Sigmoid colon (tissue), 7 donors: ENCODE measurements at regions of chr14 and their contacts with region 1.

Region 1: GRCh38 chr14:67943947-67944346 is 124.4 kb downstream of the RAD51B start:
- DNase-seq: peak; percentile 94
- H3K4me3 ChIP-seq: no peak overlapping the region
- H3K27ac ChIP-seq: peak overlapping the region; percentile 29 to 86 (median 82)
- H3K4me1 ChIP-seq: peaks cover 0 to 57% (median 51%) of the 10 kb centered on the region in 4 donors
- H3K27me3 ChIP-seq: no peaks in the 10 kb centered on the region
- CTCF ChIP-seq: peak; percentile 61 to 95 (median 88)
- EP300 ChIP-seq: no peak
- POLR2A ChIP-seq: no peak

Region 2: DNA sequence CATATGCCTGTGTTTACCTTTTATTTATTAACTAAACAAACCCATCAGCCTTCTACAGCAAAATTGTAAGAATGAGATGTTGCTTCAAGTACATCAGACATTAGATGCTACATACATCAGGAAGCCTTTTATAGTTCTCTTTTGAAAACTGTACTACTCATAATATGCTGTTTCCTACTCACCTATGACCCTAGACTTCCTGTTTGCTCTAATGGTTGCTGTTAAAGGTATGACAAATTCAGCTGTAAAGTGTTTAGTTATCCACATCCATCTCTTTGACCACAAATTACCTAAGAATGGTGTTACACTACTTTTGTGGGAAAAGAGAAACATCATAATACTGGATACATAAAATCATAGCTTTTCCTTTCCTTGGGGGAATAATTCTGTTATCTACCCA is 95.6 kb after region 1 on chr14:
- intact Hi-C with region 1: loop called (anchors 5 kb)
- DNase-seq: no peak
- H3K4me3 ChIP-seq: no peak overlapping the region
- H3K27ac ChIP-seq: peak overlapping the region; percentile 22 to 90 (median 85)
- H3K4me1 ChIP-seq: peaks cover 0 to 92% (median 61%) of the 10 kb centered on the region in 4 donors
- H3K27me3 ChIP-seq: no peaks in the 10 kb centered on the region
- CTCF ChIP-seq: no peak
- EP300 ChIP-seq: no peak
- POLR2A ChIP-seq: no peak

Region 3: DNA sequence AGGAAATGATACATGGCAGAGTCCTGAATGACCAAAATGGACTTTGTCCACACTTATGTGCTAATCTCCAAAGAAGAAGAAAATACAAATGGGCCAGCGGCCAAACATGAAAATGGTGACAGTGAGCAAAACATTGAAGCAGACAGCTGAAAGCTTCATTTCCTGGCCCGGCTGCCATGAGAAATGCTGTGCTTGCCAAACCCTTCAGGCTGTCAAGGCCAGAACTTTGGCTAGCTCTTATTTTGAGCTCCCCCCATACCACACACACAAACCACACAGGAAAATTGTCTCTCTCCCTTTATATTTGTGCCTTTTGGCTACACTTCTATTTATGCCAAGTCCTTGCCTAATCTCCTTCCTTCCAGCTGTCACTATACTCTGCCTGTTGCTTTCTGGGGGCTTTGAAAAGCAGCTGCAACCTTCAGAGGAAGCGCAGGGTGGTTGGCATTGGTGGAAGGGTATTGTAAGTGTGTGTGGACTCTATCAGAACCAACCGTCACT is 199.4 kb after region 1 on chr14:
- intact Hi-C with region 1: loop called (anchors 2 kb)
- DNase-seq: peak; percentile 93
- H3K4me3 ChIP-seq: no peak overlapping the region
- H3K27ac ChIP-seq: peak overlapping the region; percentile 86 to 92 (median 88)
- H3K4me1 ChIP-seq: peaks cover 0 to 97% (median 84%) of the 10 kb centered on the region in 4 donors
- H3K27me3 ChIP-seq: no peaks in the 10 kb centered on the region
- CTCF ChIP-seq: no peak
- EP300 ChIP-seq: peak in 1 of 4 donors; percentile 20
- POLR2A ChIP-seq: no peak

Region 4: GRCh38 chr14:68239988-68240771 is 296.2 kb after region 1 on chr14:
- intact Hi-C with region 1: loop called (anchors 2 kb)
- DNase-seq: peak; percentile 88
- H3K4me3 ChIP-seq: no peak overlapping the region
- H3K27ac ChIP-seq: peak overlapping the region; percentile 5 to 90 (median 85)
- H3K4me1 ChIP-seq: peaks cover 0 to 87% (median 75%) of the 10 kb centered on the region in 4 donors
- H3K27me3 ChIP-seq: no peaks in the 10 kb centered on the region
- CTCF ChIP-seq: no peak
- EP300 ChIP-seq: peak; percentile 43 to 87 (median 48)
- POLR2A ChIP-seq: no peak

Region 5: GRCh38 chr14:68526420-68527105 is 582.6 kb after region 1 on chr14:
- intact Hi-C with region 1: loop called (anchors 5 kb)
- DNase-seq: no peak
- H3K4me3 ChIP-seq: no peak overlapping the region
- H3K27ac ChIP-seq: peak overlapping the region; percentile 49 to 73 (median 66)
- H3K4me1 ChIP-seq: peaks cover 0 to 52% (median 38%) of the 10 kb centered on the region in 4 donors
- H3K27me3 ChIP-seq: no peaks in the 10 kb centered on the region
- CTCF ChIP-seq: no peak
- EP300 ChIP-seq: no peak
- POLR2A ChIP-seq: no peak

Region 6: DNA sequence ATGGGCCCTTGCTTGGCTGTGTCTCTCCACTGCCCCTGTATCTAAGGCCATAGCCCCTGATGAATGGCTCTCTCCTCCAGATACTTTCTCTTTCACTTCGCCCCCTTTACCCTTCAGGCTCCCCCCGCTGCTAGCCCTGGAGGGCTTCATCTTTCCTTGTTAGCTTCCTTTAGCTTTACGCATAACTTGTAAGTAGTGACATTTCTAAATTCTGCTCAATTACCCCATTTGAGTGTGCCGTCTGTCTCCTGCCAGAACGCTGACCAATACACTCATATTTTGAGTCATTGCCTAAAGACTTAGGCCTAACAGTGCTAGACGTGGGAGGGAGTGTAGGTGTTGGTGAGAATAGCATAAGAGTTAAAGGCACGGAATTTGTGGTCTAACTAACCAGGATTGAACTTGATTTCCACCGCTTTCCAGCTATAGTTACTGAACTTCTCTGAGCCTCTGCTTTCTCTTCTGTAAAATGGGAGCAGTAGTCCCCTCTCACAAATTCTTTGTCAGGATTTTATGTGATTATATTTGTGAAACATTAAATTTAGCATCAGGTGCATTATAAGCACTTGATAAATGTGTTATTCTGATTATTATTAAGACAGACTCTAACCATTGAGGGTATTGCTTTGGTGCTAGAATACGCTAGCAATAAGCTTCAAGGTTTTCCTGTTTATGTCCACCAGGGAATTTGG is 719.6 kb after region 1 on chr14:
- intact Hi-C with region 1: loop called (anchors 10 kb)
- DNase-seq: peak; percentile 56
- H3K4me3 ChIP-seq: no peak overlapping the region
- H3K27ac ChIP-seq: peak overlapping the region; percentile 70 to 88 (median 81)
- H3K4me1 ChIP-seq: peaks cover 0 to 87% (median 73%) of the 10 kb centered on the region in 4 donors
- H3K27me3 ChIP-seq: no peaks in the 10 kb centered on the region
- CTCF ChIP-seq: no peak
- EP300 ChIP-seq: no peak
- POLR2A ChIP-seq: no peak